ENCODE measurements at regions of chr1 and their contacts with region 1.

Region 1: GRCh38 chr1:150186789-150187559 is 37.3 kb downstream of the PLEKHO1 start:
- DNase-seq: peak; percentile 44
- ATAC-seq: peak; percentile 79
- H3K4me3 Mint-ChIP-seq: peak overlapping the region; percentile 1
- H3K27ac Mint-ChIP-seq: peak overlapping the region; percentile 68
- H3K4me1 Mint-ChIP-seq: peaks cover 15% of the 10 kb centered on the region
- H3K27me3 Mint-ChIP-seq: no peaks in the 10 kb centered on the region

Region 2: DNA sequence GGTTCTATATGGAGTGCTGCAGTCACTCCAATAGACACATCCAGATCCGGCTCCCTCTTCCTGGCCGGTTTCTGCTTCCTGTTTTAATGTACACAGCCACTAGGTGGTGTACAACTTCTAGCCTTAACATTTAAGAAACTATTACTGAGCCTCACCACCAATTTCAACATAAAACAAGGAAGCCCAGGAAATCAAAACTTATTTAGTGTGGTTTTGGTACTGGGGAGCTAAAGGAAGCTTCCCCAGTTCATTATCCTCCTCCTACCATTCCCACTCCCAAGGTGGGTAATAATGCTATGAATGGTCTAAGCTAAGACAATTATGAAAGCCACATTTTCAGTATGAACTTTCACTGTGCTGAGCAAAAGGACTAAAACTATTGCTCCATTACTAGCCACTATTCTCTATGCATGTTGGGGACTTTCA is 224.8 kb before region 1 on chr1:
- CTCF ChIA-PET with region 1: interaction called, 35 read pairs
- POLR2A ChIA-PET with region 1: no interaction called
- DNase-seq: peak; percentile 62
- ATAC-seq: peak; percentile 91
- H3K4me3 Mint-ChIP-seq: no peak overlapping the region
- H3K27ac Mint-ChIP-seq: no peak overlapping the region
- H3K4me1 Mint-ChIP-seq: peaks cover 16% of the 10 kb centered on the region
- H3K27me3 Mint-ChIP-seq: no peaks in the 10 kb centered on the region

Region 3: GRCh38 chr1:150067184-150068036 is 119.6 kb before region 1 on chr1 and contains the start of gene VPS45:
- CTCF ChIA-PET with region 1: interaction called, 101 read pairs
- POLR2A ChIA-PET with region 1: no interaction called
- DNase-seq: peak; percentile 90
- ATAC-seq: peak; percentile 91
- H3K4me3 Mint-ChIP-seq: peak within 1 kb of the TSS; percentile 95
- H3K27ac Mint-ChIP-seq: peak within 1 kb of the TSS; percentile 91
- H3K4me1 Mint-ChIP-seq: peaks cover 38% of the 10 kb centered on the region
- H3K27me3 Mint-ChIP-seq: no peaks in the 10 kb centered on the region
- total RNA-seq, gene VPS45: 36.1 to 40.0 TPM

Region 4: GRCh38 chr1:150127868-150128267 is 59.1 kb before region 1 on chr1:
- CTCF ChIA-PET with region 1: interaction called, 12 read pairs
- POLR2A ChIA-PET with region 1: no interaction called
- DNase-seq: no peak
- ATAC-seq: no peak
- H3K4me3 Mint-ChIP-seq: no peak overlapping the region
- H3K27ac Mint-ChIP-seq: no peak overlapping the region
- H3K4me1 Mint-ChIP-seq: no peaks in the 10 kb centered on the region
- H3K27me3 Mint-ChIP-seq: no peaks in the 10 kb centered on the region

Region 5: GRCh38 chr1:150162862-150163706 is 23.9 kb before region 1 on chr1:
- CTCF ChIA-PET with region 1: interaction called, 53 read pairs
- POLR2A ChIA-PET with region 1: interaction called, 3 read pairs
- DNase-seq: peak; percentile 58
- ATAC-seq: peak; percentile 50
- H3K4me3 Mint-ChIP-seq: peak overlapping the region; percentile 9
- H3K27ac Mint-ChIP-seq: peak overlapping the region; percentile 76
- H3K4me1 Mint-ChIP-seq: peaks cover 78% of the 10 kb centered on the region
- H3K27me3 Mint-ChIP-seq: no peaks in the 10 kb centered on the region

Region 6: GRCh38 chr1:150207281-150207971 is 20.5 kb after region 1 on chr1:
- CTCF ChIA-PET with region 1: interaction called, 15 read pairs
- POLR2A ChIA-PET with region 1: no interaction called
- DNase-seq: no peak
- ATAC-seq: no peak
- H3K4me3 Mint-ChIP-seq: no peak overlapping the region
- H3K27ac Mint-ChIP-seq: no peak overlapping the region
- H3K4me1 Mint-ChIP-seq: no peaks in the 10 kb centered on the region
- H3K27me3 Mint-ChIP-seq: peaks cover 7% of the 10 kb centered on the region

Region 7: DNA sequence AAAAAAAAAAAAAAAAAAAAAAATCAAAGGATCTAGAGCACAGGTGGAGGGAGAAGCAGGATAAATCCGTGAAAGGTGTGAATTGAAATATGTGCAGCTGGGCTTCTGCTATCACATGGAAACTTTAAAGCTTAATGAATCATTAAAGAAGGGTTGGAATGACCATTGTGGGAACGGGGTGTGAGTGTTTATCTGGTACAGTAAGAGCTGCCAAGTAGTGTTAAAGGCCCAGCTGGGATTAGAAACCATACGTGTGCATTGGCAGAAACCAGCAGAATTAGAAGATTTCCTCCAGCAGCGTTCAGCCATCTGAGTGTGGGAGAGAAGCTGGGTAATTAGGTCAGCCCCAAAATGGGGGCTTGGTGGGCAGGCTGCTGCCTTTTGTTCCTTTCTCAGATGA is 342.0 kb after region 1 on chr1:
- CTCF ChIA-PET with region 1: no interaction called
- POLR2A ChIA-PET with region 1: no interaction called
- DNase-seq: no peak
- ATAC-seq: no peak
- H3K4me3 Mint-ChIP-seq: no peak overlapping the region
- H3K27ac Mint-ChIP-seq: no peak overlapping the region
- H3K4me1 Mint-ChIP-seq: peaks cover 5% of the 10 kb centered on the region
- H3K27me3 Mint-ChIP-seq: no peaks in the 10 kb centered on the region

Measured in activated CD8-positive, alpha-beta T cell treated with anti-CD3 and anti-CD28 coated beads, Interleukin-2, amount 10 ng/mL, durations not matched to agents 7 days and 5 days (primary cell).